ENCODE measurements at regions of chr3 and their contacts with region 1.

Region 1: GRCh38 chr3:186259612-186260383 is 102.2 kb downstream of the DGKG start:
- DNase-seq: peak; percentile 56 to 93 (median 81)
- ATAC-seq: peak; percentile 95 to 100 (median 98)
- H3K4me3 ChIP-seq: no peak overlapping the region
- H3K27ac ChIP-seq: no peak overlapping the region
- H3K4me1 ChIP-seq: peaks cover 0 to 4% (median 0%) of the 10 kb centered on the region in 3 donors
- H3K27me3 ChIP-seq: no peaks in the 10 kb centered on the region
- CTCF ChIP-seq: peak; percentile 62 to 89 (median 86)

Region 2: GRCh38 chr3:186320862-186321568 is 61.2 kb after region 1 on chr3:
- intact Hi-C with region 1: no loop called
- DNase-seq: no peak
- ATAC-seq: no peak
- H3K4me3 ChIP-seq: no peak overlapping the region
- H3K27ac ChIP-seq: no peak overlapping the region
- H3K4me1 ChIP-seq: no peaks in the 10 kb centered on the region
- H3K27me3 ChIP-seq: no peaks in the 10 kb centered on the region
- CTCF ChIP-seq: no peak

Region 3: GRCh38 chr3:186413615-186414415 is 154.0 kb after region 1 on chr3:
- intact Hi-C with region 1: no loop called
- DNase-seq: peak; percentile 63 to 83 (median 71)
- ATAC-seq: peak; percentile 80 to 89 (median 86)
- H3K4me3 ChIP-seq: peak overlapping the region in 2 of 4 donors; percentile 20 to 44
- H3K27ac ChIP-seq: peak overlapping the region; percentile 56 to 80 (median 67)
- H3K4me1 ChIP-seq: peaks cover 8 to 25% (median 19%) of the 10 kb centered on the region in 3 donors
- H3K27me3 ChIP-seq: no peaks in the 10 kb centered on the region
- CTCF ChIP-seq: no peak

Region 4: DNA sequence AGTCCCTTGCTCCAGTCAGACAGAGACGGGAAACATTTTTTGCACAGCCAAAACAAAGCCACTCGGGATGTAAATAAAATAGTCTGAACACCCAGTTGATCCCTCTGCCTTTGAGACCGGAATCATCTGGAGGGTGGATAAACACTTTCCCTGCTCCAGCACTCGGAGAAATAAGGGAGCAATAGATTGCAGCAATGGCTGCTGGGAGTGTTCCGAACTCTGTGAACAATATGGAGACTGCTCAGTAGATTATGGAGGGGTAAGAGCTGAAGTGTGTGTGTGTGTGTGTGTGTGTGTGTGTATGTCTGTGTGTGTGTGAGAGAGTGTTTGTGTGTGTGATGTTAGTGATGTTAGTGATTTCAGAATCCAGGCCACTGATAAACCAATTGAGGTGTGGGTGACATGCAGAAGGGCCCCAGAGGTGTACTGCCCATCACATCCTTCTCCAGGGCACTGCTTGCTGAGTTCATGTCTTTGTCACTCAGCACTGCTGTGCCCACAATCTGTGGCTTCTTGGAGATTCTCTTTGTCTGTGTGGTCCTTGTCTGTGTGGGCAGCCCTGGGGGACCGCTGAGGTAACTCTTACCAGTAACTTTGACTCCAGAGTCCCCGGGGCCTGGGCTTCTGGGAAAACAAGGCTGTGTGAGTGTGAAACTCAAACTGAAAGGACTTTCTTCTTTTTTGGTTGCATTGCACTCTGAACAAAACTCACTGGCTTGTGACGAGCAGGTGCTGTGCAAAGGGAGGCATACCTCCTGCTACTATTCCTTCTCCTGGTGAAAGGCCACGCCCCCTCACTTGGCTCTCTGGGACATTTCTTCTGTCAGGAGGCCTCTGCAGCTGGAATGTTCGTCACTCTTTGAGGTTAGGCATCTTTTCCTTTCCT is 261.4 kb after region 1 on chr3:
- intact Hi-C with region 1: loop called in 1 of 3 experiments (anchors 10 kb)
- DNase-seq: no peak
- ATAC-seq: no peak
- H3K4me3 ChIP-seq: no peak overlapping the region
- H3K27ac ChIP-seq: no peak overlapping the region
- H3K4me1 ChIP-seq: no peaks in the 10 kb centered on the region
- H3K27me3 ChIP-seq: no peaks in the 10 kb centered on the region
- CTCF ChIP-seq: no peak

Region 5: DNA sequence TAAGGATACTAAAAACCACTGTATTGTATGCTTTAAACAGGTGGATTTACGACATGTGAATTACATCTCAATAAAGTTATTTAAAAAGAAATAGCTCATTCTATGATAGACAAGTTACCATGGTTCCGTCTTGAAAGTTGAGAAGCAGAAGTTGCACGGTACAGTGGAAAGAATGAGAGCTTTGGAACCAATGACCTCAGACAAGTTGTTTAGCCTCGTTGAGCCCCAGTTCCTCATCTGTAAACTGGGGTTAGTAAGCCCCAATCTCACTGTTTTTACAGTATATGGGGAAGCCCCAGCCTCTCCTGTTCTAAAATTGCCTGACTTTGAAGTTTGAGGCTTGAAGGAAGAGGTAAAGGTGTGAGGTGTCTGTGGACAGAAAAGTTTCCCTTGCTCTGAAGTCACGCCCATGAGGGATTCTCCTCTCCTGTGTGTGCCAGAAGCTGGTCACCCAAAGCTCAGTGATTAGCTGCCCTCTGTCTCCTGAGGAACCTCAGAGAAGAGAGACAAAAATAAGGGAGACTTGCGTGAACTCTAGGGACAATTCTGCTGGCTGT is 274.4 kb after region 1 on chr3:
- intact Hi-C with region 1: loop called in 2 of 3 experiments (anchors 5 to 10 kb)
- DNase-seq: no peak
- ATAC-seq: peak in 2 of 4 donors; percentile 56 to 67
- H3K4me3 ChIP-seq: no peak overlapping the region
- H3K27ac ChIP-seq: no peak overlapping the region
- H3K4me1 ChIP-seq: peaks cover 0 to 4% (median 0%) of the 10 kb centered on the region in 3 donors
- H3K27me3 ChIP-seq: no peaks in the 10 kb centered on the region
- CTCF ChIP-seq: no peak

Region 6: DNA sequence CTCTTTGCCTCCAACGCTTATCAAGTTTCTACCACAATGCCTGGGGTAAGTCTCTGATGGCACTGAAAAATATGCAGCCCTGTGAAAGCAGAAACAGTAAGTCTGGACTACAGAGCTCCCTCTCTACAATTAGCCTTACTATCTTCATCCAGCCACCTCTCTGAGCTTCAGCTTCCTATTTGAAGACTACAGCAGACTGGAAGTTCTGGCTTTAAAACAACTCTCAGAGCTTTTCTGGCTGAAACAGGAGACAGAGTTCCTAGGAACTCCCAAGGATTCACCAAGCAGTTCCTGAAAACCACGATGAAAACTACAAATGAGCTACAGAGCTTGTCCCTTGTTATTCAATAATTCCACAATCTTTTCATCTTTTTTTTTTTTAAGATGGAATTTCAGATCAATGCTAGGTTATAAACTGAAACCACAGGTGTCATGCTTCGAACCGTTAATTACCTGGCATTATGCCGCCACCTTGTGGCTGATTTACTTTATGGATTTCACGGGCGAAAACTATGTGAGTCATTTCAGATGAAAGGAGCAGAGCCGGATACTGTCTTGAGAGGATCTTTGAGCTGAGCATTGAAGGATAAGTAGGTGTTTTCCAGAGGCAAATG is 280.5 kb after region 1 on chr3:
- intact Hi-C with region 1: loop called in 2 of 3 experiments (anchors 5 kb)
- DNase-seq: peak in 5 of 6 donors; percentile 59 to 86 (median 60)
- ATAC-seq: peak; percentile 94 to 99 (median 96)
- H3K4me3 ChIP-seq: no peak overlapping the region
- H3K27ac ChIP-seq: peak overlapping the region in 1 of 4 donors; percentile 30
- H3K4me1 ChIP-seq: peaks cover 0 to 4% (median 0%) of the 10 kb centered on the region in 3 donors
- H3K27me3 ChIP-seq: no peaks in the 10 kb centered on the region
- CTCF ChIP-seq: peak; percentile 34 to 72 (median 55)

Measured in pancreas (tissue), 10 donors.